Colonic mucosa (tissue), 4 donors: ENCODE measurements at regions of chr12 and their contacts with region 1.

Region 1: GRCh38 chr12:115473257-115473956 is 789.4 kb upstream of the TBX3 start:
- DNase-seq: no peak
- H3K4me3 ChIP-seq: no peak overlapping the region
- H3K27ac ChIP-seq: no peak overlapping the region
- H3K4me1 ChIP-seq: no peaks in the 10 kb centered on the region
- H3K27me3 ChIP-seq: no peaks in the 10 kb centered on the region
- CTCF ChIP-seq: no peak

Region 2: GRCh38 chr12:114684098-114684869 is 789.1 kb before region 1 on chr12 and contains the start of gene TBX3:
- intact Hi-C with region 1: loop called (anchors 10 kb)
- DNase-seq: peak; percentile 93
- H3K4me3 ChIP-seq: peak within 1 kb of the TSS; percentile 56
- H3K27ac ChIP-seq: peak within 1 kb of the TSS; percentile 88
- H3K4me1 ChIP-seq: no peaks in the 10 kb centered on the region
- H3K27me3 ChIP-seq: peaks cover 25% of the 10 kb centered on the region
- CTCF ChIP-seq: peak; percentile 36
- total RNA-seq, gene TBX3: 4.8 to 7.2 TPM